ENCODE measurements at regions of chr18 and their contacts with region 1.

Region 1: DNA sequence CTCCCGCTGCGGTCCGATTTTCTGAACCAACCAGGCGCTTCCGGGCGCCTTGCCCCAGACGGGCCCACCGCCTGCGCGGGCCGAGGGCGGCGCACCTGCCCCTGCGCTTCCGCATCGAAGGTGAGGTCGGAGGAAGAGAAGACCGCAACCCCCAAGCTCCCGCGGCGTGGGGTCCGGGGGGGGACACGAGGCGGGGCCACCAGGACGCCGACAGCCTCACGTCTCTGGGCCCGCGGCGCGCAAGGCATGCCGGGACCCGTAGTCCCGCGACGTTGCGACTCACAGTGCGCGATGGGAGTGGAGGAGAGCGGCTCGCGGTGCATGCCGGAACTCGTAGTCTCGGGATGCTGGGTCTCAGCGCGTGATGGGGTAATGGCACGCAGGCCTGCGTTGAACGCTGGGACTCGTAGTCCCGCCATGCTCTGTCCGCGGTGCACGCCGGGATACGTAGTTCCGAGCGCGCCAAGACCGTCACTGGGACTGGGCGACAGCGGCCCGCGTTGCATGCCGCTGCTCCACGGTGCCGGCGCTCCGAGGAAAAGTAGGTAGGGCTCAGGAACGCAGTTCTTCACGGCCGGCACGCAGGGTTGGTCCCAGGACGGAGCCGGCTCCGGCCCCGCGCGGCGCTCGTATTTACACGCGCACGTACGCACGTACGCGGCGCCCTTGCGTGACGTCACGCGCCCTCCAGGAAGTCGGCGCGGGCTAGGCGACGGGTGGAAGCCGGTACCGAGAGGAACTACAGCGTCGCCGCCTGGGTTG is at the start of gene CTDP1:
- DNase-seq: peak; percentile 98
- H3K4me3 Mint-ChIP-seq: peak within 1 kb of the TSS; percentile 93
- H3K27ac Mint-ChIP-seq: peak within 1 kb of the TSS; percentile 98
- H3K4me1 Mint-ChIP-seq: peaks cover 64% of the 10 kb centered on the region
- H3K27me3 Mint-ChIP-seq: no peaks in the 10 kb centered on the region
- total RNA-seq, gene CTDP1: 28.0 to 29.1 TPM

Region 2: DNA sequence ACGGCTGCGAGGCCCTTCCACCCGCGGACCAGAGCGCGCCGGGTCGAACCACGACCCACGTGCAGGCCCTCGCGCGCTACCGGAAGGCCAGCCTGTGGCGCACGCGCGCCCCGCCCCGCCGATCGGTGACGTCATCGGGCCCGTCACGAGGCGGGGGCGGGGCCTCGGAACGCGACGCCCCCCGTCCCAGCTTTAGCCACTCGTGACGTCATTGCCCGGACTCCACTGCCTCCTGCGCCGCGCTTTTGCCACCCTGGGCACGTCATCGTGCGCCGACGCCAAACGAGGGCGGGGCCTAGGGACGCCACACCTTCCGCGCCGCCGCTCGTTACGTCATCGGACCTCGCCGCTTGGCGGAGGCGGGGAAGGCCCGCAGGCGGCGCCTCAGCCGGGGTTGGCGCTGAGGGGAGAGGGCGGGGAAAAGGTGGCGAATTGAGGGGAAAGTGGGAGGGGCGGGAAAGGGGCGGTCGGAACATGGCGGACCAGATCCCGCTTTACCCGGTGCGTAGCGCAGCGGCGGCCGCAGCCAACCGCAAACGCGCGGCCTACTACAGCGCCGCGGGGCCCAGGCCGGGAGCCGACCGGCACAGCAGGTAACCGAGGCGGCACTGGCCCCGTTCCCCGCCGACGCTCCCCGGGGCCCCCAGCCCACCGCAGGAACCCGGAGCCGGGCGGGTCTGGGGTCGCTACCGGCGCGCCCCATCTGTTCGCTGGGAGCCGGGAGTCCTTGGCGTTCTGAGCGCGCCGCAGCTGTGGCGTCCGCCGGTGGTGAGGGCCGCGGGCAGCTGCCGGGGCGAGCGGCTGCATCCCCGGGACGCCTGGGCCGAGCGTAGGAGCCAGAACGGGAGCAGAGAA is 610.1 kb before region 1 on chr18 and contains the start of gene ATP9B:
- CTCF ChIA-PET with region 1: no interaction called
- intact Hi-C with region 1: loop called (anchors 1 kb)
- DNase-seq: peak; percentile 98
- H3K4me3 Mint-ChIP-seq: peak within 1 kb of the TSS; percentile 91
- H3K27ac Mint-ChIP-seq: peak within 1 kb of the TSS; percentile 97
- H3K4me1 Mint-ChIP-seq: peaks cover 33% of the 10 kb centered on the region
- H3K27me3 Mint-ChIP-seq: peaks cover 3% of the 10 kb centered on the region
- total RNA-seq, gene ATP9B: 18.6 to 19.1 TPM

Region 3: GRCh38 chr18:79405781-79406575 is 273.3 kb before region 1 on chr18:
- CTCF ChIA-PET with region 1: no interaction called
- intact Hi-C with region 1: loop called (anchors 1 kb)
- DNase-seq: peak; percentile 96
- H3K4me3 Mint-ChIP-seq: peak overlapping the region; percentile 81
- H3K27ac Mint-ChIP-seq: peak overlapping the region; percentile 94
- H3K4me1 Mint-ChIP-seq: peaks cover 63% of the 10 kb centered on the region
- H3K27me3 Mint-ChIP-seq: no peaks in the 10 kb centered on the region

Region 4: DNA sequence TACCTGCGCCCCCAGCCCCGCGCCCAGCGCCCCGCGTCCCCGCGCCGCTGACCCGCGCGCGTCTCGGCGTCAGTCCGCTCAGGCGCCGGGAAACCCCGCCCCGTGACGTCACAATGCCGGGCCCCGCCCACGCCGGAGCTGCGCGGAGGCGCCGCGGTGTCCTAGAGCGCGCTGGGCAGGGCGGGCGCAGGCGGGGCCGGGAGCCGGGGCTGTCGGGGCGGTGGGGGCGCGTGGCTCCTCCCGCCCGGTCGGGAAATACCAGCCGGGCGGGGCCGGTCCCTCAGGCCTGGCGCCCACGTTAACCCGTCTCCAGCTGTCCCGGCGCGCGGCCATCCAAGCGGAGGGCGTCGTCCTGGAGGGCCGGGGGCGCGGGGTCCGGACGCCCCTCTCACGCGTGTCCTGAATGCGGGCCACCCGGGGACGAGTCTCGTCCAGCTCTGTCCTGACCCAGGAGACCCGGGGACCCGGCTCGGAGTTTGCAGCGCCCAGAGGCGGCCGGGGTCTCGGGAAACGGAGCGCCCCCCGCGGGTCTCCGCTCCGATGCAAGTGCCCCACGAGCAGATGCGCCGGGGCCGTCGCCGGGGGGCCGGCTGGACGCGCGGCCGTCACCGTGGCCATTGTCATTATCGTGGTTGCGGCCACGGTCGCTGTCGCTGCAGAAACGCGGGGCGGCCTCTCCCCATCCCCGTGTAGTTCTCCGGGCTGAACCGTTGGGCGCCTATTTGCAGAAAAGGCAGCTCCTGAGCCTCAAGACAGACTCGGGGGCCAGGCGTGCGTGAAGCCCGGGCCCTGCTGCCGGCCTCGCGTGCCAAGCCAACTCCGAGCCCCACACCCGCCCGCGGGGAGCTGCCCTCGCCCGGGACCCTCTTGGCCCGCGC is 272.5 kb after region 1 on chr18 and contains the start of gene SLC66A2:
- CTCF ChIA-PET with region 1: no interaction called
- intact Hi-C with region 1: loop called (anchors 1 kb)
- DNase-seq: peak; percentile 94
- H3K4me3 Mint-ChIP-seq: peak within 1 kb of the TSS; percentile 78
- H3K27ac Mint-ChIP-seq: peak within 1 kb of the TSS; percentile 55
- H3K4me1 Mint-ChIP-seq: peaks cover 31% of the 10 kb centered on the region
- H3K27me3 Mint-ChIP-seq: no peaks in the 10 kb centered on the region
- total RNA-seq, gene SLC66A2: 26.0 to 26.8 TPM

Region 5: DNA sequence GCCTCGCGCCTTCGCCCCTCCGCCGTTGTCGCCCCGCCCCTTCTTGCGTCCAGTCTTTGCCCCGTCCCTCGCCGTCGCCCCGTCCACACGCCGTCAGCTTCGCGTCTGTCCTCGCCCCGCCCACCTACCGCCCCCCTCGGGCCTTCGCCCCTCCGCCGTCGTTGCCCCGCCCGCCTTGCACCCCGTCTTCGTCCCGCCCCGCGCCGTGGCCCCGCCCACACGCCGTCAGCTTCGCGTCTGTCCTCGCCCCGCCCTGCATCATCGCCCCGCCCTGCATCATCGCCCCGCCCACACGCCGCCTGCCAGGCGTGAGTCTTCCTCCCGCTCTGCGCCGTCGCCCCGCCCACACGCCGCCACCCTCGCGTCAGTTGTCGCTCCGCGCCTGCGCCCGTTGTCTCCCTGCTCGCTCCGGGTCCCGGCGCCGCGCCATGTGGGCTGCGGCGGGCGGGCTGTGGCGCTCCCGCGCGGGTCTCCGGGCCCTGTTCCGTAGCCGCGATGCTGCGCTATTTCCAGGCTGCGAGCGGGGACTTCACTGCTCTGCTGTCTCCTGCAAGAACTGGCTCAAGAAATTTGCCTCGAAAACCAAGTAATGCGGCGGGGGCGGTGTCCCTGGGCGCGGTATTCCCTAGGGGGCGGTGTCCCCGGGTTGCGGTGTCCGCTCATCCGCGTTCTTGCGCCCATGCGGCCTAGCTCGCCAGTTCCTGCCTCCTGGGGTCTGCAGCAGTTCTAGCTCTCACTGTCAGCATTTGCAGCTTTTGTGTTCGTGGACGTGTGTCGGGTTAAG is 355.0 kb after region 1 on chr18 and contains the start of gene RBFA:
- CTCF ChIA-PET with region 1: no interaction called
- intact Hi-C with region 1: loop called (anchors 1 kb)
- DNase-seq: peak; percentile 100
- H3K4me3 Mint-ChIP-seq: peak within 1 kb of the TSS; percentile 82
- H3K27ac Mint-ChIP-seq: peak within 1 kb of the TSS; percentile 73
- H3K4me1 Mint-ChIP-seq: peaks cover 26% of the 10 kb centered on the region
- H3K27me3 Mint-ChIP-seq: no peaks in the 10 kb centered on the region
- total RNA-seq, gene RBFA: 35.7 to 36.0 TPM